AG04449 (cell line): ENCODE measurements at regions of chr4 and their contacts with region 1.

Region 1: GRCh38 chr4:742742-743311 is 37.2 kb downstream of the PCGF3 start:
- DNase-seq: no peak
- H3K4me3 ChIP-seq: no peak overlapping the region
- CTCF ChIP-seq: peak; percentile 84

Region 2: GRCh38 chr4:726235-726787 is 16.5 kb before region 1 on chr4:
- CTCF ChIA-PET with region 1: interaction called, 14 read pairs
- POLR2A ChIA-PET with region 1: no interaction called
- DNase-seq: no peak
- H3K4me3 ChIP-seq: no peak overlapping the region
- CTCF ChIP-seq: no peak

Region 3: DNA sequence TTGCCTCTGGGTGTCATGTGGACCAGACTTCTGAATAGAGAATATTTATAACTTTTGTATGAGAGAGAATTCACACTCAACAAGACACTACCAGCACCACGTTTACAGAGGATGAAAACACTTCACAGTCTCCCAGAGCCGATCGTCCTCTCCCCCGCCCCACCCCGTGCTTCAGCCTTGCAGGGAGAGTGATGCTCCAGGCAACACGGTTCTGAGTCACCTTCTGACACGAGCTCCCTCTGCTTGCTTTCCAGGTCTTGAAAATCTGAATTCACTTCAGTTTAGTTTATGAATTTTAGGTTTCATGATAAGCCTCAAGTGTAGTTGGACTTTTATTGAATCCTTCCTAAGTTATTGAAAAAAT is 23.3 kb after region 1 on chr4:
- CTCF ChIA-PET with region 1: interaction called, 25 read pairs
- POLR2A ChIA-PET with region 1: no interaction called
- DNase-seq: no peak
- H3K4me3 ChIP-seq: no peak overlapping the region
- CTCF ChIP-seq: no peak

Region 4: DNA sequence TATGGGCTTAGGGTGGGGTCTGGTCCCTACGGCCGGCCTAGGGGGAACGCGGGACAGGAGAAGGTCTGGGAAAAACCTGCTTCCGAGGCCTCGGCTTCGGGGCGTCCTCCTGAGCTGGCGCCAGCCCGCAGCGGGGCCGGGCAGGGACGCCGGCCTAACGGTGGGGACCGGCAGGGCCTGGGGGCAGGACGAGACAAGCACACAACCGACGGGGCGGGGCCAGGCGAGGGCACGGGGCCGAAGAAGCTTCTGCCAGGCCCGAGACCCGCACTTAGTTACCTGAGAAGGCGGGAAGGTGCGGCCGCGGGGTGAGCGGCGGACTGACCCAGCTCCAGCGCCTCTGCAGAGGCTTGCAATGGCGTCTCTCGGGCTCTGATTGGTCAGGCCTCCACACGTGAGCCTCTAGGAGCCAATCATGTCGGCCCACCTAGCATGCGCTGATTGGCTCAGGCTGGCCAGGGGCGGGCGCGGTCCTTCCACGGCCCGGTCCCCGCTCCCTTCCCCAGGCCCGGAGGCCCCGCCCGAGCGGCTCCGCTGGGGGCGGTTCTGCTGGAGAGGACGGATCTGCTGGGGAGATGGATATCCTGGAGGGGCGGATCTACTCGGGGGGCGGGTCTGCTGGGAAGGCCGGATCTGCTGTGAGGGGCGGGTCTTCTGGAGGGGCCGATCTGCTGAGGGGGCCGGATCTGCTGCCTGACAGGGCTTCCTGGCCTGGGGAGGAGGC is 38.8 kb after region 1 on chr4:
- CTCF ChIA-PET with region 1: interaction called, 17 read pairs
- POLR2A ChIA-PET with region 1: no interaction called
- DNase-seq: peak; percentile 90
- H3K4me3 ChIP-seq: peak overlapping the region; percentile 93
- CTCF ChIP-seq: no peak

Region 5: DNA sequence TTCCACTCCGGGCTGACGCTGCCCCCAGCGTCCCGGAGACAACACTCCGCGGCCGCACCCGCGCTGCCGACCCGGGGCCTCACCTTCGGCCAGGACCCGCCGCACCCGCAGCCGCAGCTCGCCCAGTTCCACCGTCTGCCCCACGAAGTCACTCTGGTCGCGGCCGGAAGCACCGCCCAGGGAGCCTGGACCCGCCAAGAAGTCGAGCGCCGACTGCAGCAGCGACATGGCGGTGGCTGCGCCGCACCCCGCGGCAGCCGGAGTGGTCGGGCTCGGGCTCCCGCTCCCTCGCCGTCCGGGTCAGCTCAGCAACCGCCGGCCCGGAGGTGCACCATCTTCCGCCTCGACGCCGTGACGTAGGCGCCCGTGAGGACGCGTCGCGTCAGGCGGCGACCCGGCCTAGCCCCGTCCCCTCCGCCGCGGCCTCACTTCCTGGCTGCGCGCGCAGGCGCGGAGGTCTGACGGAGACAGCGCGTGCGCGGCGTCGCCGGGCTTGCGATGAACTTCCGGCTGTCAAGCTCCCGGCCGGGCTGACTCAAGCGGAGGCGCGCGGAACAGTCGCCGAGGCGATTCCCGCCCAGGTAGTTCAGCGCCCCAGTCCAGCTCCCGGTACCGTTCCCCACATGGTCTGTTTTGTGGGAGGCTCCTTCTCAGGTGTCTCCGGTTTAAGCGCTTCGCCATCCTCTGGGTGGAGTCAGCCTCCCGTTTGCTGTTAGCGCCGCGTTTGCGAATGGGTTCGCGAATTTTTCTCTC is 189.3 kb after region 1 on chr4 and contains the starts of genes GAK and TMEM175:
- CTCF ChIA-PET with region 1: interaction called, 11 read pairs
- POLR2A ChIA-PET with region 1: no interaction called
- DNase-seq: peak; percentile 51
- H3K4me3 ChIP-seq: peak within 1 kb of the TSS; percentile 98
- CTCF ChIP-seq: no peak

Region 6: DNA sequence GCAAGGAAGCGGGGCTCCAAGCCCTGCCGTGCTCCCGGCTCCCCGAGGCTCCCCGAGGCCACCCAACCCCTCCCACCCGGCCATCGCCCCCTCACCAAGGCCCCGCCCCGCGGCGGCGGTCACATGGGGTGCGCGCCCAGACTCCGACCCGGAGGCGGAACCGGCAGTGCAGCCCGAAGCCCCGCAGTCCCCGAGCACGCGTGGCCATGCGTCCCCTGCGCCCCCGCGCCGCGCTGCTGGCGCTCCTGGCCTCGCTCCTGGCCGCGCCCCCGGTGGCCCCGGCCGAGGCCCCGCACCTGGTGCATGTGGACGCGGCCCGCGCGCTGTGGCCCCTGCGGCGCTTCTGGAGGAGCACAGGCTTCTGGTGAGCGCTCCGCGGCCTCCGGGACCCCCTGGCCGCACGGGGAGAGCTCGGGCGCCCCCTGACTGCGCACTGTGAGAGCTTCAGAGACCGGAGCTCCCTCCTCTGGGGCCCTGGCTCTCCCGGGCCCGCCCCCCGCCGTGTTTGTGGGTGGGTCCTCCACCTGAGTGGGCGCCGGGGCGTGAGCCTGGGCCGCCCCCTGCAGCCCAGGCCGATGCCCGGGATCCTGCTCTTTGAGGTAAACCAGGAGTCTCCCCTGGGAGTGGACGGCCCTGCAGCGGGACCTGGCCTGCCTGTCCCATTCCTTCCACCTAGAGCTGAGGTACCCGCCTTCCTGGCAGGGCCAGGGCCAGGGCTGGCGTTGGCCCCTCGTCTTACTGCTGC is 244.2 kb after region 1 on chr4 and contains the start of gene IDUA:
- CTCF ChIA-PET with region 1: interaction called, 21 read pairs
- POLR2A ChIA-PET with region 1: no interaction called
- DNase-seq: no peak
- H3K4me3 ChIP-seq: peak within 1 kb of the TSS; percentile 74
- CTCF ChIP-seq: peak; percentile 70